ENCODE measurements at regions of chr15 and their contacts with region 1.

Region 1: GRCh38 chr15:91348752-91349500 is 248.9 kb downstream of the SV2B start:
- DNase-seq: no peak
- H3K4me3 ChIP-seq: no peak overlapping the region
- H3K27ac ChIP-seq: no peak overlapping the region
- H3K4me1 ChIP-seq: no peaks in the 10 kb centered on the region
- H3K27me3 ChIP-seq: no peaks in the 10 kb centered on the region
- CTCF ChIP-seq: no peak
- POLR2A ChIP-seq: no peak

Region 2: DNA sequence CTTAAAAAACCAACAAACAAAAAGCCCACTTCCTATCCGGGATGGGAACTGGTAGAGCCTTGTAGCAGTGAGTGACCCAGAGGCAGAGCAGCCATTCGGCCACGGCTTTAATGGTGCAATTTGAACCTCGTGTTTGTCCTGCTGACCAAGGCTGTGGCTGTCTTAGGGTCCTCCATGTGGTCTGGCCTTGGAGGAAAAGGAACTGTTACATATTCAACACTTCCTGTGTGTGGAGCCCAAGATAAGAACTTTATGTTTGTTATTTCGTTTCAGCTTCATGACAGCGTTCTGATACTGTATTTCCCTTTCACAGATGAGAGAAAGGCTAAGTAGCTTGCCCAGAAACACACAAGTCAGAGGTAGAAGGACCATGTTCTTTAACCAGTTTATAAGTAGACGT is 20.9 kb after region 1 on chr15:
- intact Hi-C with region 1: loop called (anchors 2 kb)
- DNase-seq: no peak
- H3K4me3 ChIP-seq: no peak overlapping the region
- H3K27ac ChIP-seq: no peak overlapping the region
- H3K4me1 ChIP-seq: no peaks in the 10 kb centered on the region
- H3K27me3 ChIP-seq: no peaks in the 10 kb centered on the region
- CTCF ChIP-seq: no peak
- POLR2A ChIP-seq: no peak

Region 3: GRCh38 chr15:91561371-91562100 is 212.6 kb after region 1 on chr15:
- intact Hi-C with region 1: no loop called
- DNase-seq: peak in 1 of 2 donors; percentile 49
- H3K4me3 ChIP-seq: no peak overlapping the region
- H3K27ac ChIP-seq: no peak overlapping the region
- H3K4me1 ChIP-seq: peaks cover 8% of the 10 kb centered on the region
- H3K27me3 ChIP-seq: no peaks in the 10 kb centered on the region
- CTCF ChIP-seq: no peak
- POLR2A ChIP-seq: no peak